OCI-LY7 (cell line): ENCODE measurements at regions of chr7 and their contacts with region 1.

Region 1: DNA sequence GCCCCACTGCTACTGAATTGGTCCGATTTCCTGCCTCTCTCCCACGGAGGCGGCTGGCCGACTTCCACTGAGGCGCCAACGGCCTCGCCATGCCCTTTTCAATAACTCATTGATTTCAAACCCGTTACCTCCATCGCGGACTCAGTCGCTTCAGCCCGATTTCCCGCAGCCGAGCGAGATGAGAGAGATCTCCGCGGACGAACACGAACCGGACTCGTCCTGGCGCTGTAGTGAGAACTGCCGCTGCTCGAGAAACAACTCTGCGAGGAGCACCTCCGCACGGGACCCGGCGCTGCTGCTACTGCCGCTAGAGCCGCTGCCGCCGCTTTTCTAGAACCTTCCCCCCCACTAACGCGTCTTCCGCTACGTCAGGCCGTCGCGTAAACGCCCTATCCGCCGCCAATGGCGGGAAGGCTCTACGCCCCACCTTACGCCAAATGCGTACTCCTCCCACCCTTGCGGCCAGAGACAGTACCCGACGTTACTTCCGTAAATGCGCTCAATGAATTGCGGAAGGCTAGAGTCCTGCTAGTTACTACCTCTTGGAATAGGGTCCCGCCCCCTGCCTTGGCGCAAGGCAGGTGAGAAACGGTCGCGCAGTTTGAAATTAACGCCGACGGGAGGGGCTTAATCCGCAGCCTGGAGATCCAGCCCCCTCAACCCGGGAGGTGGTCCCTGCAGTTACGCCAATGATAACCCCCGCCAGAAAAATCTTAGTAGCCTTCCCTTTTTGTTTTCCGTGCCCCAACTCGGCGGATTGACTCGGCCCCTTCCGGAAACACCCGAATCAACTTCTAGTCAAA is at the start of gene HNRNPA2B1:
- DNase-seq: peak; percentile 99
- H3K4me3 ChIP-seq: peak within 1 kb of the TSS; percentile 99
- H3K27ac ChIP-seq: peak within 1 kb of the TSS; percentile 100
- H3K4me1 ChIP-seq: peaks cover 42% of the 10 kb centered on the region
- CTCF ChIP-seq: no peak
- total RNA-seq, gene HNRNPA2B1: 258 and 406 TPM in 2 replicates

Region 2: DNA sequence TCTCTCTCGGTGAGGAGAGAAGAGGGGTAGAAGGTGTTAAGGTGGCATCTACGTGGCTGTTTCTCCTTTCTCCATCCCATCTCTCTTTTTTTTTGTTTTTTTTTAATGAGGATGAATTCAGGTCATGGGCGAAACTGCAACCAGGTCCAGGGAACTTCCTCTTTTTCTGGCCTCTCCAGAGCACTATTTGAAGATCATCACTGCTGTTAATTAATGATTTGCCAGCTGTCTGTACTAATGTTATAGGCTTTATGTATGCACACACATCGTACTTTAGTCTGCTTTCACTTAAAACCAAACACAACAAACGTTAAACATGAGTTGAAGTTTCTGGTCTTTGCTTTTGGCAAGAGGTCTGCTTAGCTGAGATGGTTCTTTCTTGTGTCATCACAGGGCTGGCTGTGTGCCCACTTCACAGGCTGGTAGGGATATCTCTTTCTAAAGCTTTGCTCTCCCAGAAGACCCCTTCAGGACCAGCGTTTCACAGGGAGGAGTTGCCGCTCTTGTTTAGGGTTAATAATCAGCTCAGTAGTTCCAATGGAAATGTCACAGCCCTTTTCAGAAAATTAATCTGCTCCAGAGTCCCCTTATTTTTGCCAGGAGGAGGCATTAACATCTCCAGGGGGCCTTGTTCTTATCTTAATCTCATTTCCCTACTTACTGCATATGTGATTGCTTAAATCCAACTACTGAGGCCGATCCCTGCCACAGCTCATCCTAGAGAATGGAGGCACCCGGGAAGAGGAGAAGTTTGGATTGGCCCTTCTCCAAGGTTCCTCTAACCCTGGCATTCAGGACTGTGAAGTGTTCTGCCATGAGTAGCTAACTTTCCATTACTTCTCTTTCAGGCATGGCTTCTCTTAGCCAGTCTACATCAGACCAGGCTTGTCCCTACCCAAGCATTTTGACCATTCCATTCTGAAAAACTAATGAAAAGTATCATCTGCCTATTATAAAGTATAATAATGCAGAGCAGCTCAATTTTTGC is 322.5 kb before region 1 on chr7:
- CTCF ChIA-PET with region 1: no interaction called
- POLR2A ChIA-PET with region 1: no interaction called
- intact Hi-C with region 1: no loop called
- DNase-seq: peak; percentile 40
- H3K4me3 ChIP-seq: no peak overlapping the region
- H3K27ac ChIP-seq: no peak overlapping the region
- H3K4me1 ChIP-seq: peaks cover 9% of the 10 kb centered on the region
- CTCF ChIP-seq: no peak

Region 3: DNA sequence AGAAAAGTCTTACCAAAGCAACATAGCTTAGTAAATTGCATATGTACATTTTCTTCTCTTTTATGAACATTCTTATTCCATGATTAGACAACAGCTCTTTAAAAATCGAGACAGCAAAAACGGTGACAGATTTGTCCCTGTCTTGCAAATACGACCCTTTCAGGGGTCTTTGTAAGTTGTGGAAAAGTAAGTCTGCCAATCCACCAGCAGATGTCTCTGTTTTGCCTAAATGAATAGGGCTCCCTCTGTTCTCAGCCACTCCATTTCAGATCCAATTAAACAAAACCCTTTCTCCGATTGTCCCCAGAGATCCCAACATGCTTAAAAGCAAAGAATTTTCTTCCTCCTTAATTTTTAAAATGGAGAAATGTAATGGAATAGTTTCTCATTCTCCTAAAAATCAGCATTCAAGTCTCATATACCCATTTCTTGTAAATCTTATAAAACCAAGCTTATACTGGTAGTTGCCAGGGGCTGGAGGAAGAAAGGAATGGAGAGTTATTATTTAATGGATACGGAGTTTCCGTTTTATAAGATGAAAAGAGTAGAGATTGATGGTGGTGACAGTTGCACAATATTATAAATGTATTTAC is 109.6 kb before region 1 on chr7:
- CTCF ChIA-PET with region 1: interaction called, 3 read pairs
- POLR2A ChIA-PET with region 1: interaction called, 5 read pairs
- intact Hi-C with region 1: loop called (anchors 2 kb)
- DNase-seq: peak; percentile 76
- H3K4me3 ChIP-seq: peak overlapping the region; percentile 9
- H3K27ac ChIP-seq: no peak overlapping the region
- H3K4me1 ChIP-seq: peaks cover 15% of the 10 kb centered on the region
- CTCF ChIP-seq: peak; percentile 98

Region 4: DNA sequence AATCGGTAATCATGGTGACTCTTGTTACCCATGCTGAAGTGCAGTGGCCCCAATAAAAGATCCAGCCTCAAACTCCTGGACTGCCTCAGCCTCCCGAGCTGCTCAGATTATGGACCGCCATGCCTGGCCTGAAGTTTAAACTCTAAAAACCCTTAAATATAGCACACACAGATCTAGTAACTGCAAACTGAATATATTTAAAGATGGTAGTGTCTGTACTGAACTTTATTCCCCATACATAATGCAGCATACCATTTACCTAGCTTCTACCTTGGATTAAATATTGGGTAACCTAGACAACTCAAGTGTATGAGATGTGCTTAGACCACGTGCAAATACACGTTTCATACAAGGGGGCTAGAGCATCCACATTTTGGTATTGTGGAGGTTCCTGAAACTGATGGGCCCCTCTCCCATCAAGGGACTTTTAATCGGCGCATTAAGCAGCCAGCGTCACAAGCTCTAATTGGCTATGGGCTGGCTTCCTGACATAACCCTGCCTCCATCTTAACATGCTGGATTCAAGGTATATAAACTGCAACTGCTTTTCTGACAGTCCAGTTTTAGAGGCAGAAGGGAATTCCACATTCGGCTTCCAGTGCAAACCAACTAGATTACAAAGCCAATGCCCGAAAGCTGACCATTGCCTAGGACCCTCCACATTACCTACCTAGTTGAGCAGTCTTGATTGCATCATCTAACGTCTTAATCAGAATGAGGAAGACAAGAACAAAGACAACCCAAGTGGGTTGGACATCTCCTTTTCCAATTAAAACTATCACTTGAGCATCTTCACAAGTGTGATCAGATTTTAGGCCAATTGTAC is 13.1 kb before region 1 on chr7:
- CTCF ChIA-PET with region 1: interaction called, 3 read pairs
- POLR2A ChIA-PET with region 1: interaction called, 26 read pairs
- intact Hi-C with region 1: no loop called
- DNase-seq: peak; percentile 43
- H3K4me3 ChIP-seq: no peak overlapping the region
- H3K27ac ChIP-seq: peak overlapping the region; percentile 60
- H3K4me1 ChIP-seq: peaks cover 26% of the 10 kb centered on the region
- CTCF ChIP-seq: no peak

Region 5: GRCh38 chr7:26337232-26337865 is 136.7 kb after region 1 on chr7:
- CTCF ChIA-PET with region 1: no interaction called
- POLR2A ChIA-PET with region 1: interaction called, 4 read pairs
- intact Hi-C with region 1: loop called (anchors 2 kb)
- DNase-seq: peak; percentile 56
- H3K4me3 ChIP-seq: peak overlapping the region; percentile 59
- H3K27ac ChIP-seq: peak overlapping the region; percentile 85
- H3K4me1 ChIP-seq: peaks cover 43% of the 10 kb centered on the region
- CTCF ChIP-seq: no peak

Region 6: GRCh38 chr7:26348234-26348851 is 147.7 kb after region 1 on chr7:
- CTCF ChIA-PET with region 1: no interaction called
- POLR2A ChIA-PET with region 1: no interaction called
- intact Hi-C with region 1: no loop called
- DNase-seq: no peak
- H3K4me3 ChIP-seq: no peak overlapping the region
- H3K27ac ChIP-seq: no peak overlapping the region
- H3K4me1 ChIP-seq: peaks cover 2% of the 10 kb centered on the region
- CTCF ChIP-seq: no peak

Region 7: DNA sequence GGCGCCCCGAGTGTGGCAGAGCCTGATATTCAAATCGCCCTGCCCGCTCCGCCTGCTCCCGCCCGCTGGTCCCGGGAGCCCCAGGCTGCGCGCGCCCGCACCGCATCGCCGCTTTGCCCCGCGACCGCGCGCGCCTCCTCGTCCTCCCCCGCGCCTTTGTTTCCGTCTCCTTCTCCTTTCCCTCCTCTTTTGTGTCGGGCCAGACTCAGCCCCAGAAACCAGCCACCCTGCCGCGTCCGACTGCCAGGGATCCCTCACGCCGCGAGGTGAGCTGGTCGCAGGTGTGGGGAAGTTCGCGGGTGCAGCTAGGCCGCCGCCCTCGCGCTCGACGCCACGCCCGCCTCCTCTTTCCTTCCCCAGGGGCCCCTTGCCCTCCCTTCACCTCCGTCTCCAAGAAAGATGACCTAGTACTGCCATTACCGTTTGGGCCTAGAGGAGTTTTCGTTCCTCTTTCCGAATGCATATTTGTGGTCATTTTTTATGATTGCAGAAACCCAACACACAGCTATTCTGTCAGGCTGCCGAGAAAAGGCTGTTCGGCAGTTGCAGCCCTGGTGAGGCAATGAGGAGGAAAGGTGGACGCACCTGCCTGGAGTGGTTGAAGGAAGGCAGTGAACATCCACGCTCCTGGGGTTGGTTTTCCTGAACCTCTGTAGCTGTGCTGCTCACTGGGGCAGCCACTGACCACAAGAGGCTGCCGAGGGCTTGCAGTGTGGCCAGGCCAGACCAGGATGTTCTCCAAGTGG is 198.3 kb after region 1 on chr7:
- CTCF ChIA-PET with region 1: no interaction called
- POLR2A ChIA-PET with region 1: interaction called, 3 read pairs
- intact Hi-C with region 1: loop called (anchors 1 kb)
- DNase-seq: peak; percentile 94
- H3K4me3 ChIP-seq: peak overlapping the region; percentile 67
- H3K27ac ChIP-seq: peak overlapping the region; percentile 94
- H3K4me1 ChIP-seq: peaks cover 41% of the 10 kb centered on the region
- CTCF ChIP-seq: no peak